H1 (cell line): ENCODE measurements at regions of chr9 and their contacts with region 1.

Region 1: GRCh38 chr9:137046098-137046787 is at the start of gene NPDC1:
- DNase-seq: peak; percentile 59 to 99
- H3K4me3 ChIP-seq: peak within 1 kb of the TSS; percentile 38 to 62 (median 56)
- H3K27ac ChIP-seq: no peak within 1 kb of the TSS
- H3K4me1 ChIP-seq: peaks cover 3 to 14% (median 8%) of the 10 kb centered on the region in 4 experiments; a peak in 6 of 7 replicates
- H3K27me3 ChIP-seq: peaks cover 17 to 51% (median 37%) of the 10 kb centered on the region in 4 experiments
- CTCF ChIP-seq: peak in 2 of 3 experiments; percentile 85 to 94; a peak in 3 of 4 replicates
- EP300 ChIP-seq: peak in 1 of 2 experiments; percentile 56; a peak in 1 of 3 replicates
- POLR2A ChIP-seq: no peak
- RAD21 ChIP-seq: peak; percentile 63 to 76
- total RNA-seq, gene NPDC1: 41.9 and 44.1 TPM in 2 replicates

Region 2: DNA sequence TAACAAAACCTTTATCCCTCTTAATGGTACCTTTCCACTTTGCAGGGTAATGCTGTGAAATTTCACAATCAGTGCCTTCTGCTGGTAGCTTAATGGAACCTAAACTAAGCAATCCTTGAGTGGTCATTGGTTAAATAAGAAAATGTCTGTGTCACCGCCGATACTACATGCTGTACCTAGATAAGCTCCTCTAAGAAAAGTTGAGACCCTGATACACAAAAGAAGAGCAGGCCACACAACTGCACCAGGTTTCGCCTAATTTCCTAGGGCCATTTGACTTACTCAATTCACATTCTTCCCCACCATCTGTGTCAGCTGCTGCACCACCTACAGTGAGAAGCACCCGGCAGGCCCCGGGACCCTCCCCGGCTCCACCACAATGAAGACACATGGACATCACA is 171.1 kb before region 1 on chr9:
- CTCF ChIA-PET with region 1: no interaction called
- POLR2A ChIA-PET with region 1: no interaction called
- DNase-seq: no peak
- H3K4me3 ChIP-seq: no peak overlapping the region
- H3K27ac ChIP-seq: no peak overlapping the region
- H3K4me1 ChIP-seq: no peaks in the 10 kb centered on the region
- H3K27me3 ChIP-seq: no peaks in the 10 kb centered on the region
- CTCF ChIP-seq: no peak
- EP300 ChIP-seq: no peak
- POLR2A ChIP-seq: no peak
- RAD21 ChIP-seq: no peak

Region 3: DNA sequence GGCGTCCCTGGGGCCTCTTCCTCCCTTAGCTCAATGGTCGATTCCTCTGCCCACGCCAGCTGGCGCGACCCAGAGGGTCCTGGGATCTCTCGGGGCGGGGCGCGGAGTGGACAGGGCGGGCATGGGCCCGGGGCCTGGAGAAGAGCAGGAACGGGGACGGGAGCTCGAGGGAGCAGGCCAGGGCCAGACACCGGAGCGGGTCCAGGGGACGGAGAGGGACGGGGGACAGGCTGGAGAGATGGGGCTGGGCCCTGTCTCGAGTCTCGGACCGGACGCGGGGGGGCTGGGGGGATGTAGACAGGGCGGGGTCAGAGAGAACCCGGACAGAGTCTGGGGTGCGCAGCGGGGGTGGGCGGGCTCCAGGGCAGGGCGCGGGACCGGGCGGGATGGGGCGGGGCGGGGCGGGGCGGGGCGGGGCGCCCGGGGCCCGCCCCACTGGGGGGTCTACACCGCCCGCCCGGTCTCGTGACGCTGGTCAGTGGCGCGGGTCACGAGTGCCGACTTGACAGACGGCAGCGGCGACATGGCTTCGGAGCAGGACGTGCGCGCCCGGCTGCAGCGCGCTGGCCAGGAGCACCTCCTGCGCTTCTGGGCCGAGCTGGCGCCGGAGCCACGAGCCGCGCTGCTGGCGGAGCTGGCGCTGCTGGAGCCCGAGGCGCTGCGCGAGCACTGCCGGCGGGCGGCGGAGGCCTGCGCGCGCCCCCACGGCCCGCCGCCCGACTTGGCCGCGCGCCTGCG is 30.9 kb after region 1 on chr9 and contains the start of gene UAP1L1:
- CTCF ChIA-PET with region 1: interaction called, 291 read pairs
- POLR2A ChIA-PET with region 1: no interaction called
- DNase-seq: peak in 1 of 2 experiments; percentile 78
- H3K4me3 ChIP-seq: peak within 1 kb of the TSS; percentile 33 to 57 (median 42)
- H3K27ac ChIP-seq: no peak within 1 kb of the TSS
- H3K4me1 ChIP-seq: peaks cover 0 to 20% (median 12%) of the 10 kb centered on the region in 4 experiments; a peak in 6 of 7 replicates
- H3K27me3 ChIP-seq: peaks cover 20 to 50% (median 34%) of the 10 kb centered on the region in 4 experiments
- CTCF ChIP-seq: no peak
- EP300 ChIP-seq: no peak
- POLR2A ChIP-seq: no peak
- RAD21 ChIP-seq: no peak
- total RNA-seq, gene UAP1L1: 5.4 and 5.5 TPM in 2 replicates